MCF 10A (cell line): ENCODE measurements at regions of chr4 and their contacts with region 1.

Region 1: GRCh38 chr4:26126143-26126718 is 194.6 kb upstream of the RBPJ start:
- DNase-seq: no peak
- H3K4me3 Mint-ChIP-seq: no peak overlapping the region
- H3K27ac Mint-ChIP-seq: no peak overlapping the region
- H3K4me1 Mint-ChIP-seq: peaks cover 21% of the 10 kb centered on the region
- H3K27me3 Mint-ChIP-seq: no peaks in the 10 kb centered on the region
- CTCF ChIP-seq: no peak

Region 2: GRCh38 chr4:26105815-26106699 is 20.2 kb before region 1 on chr4:
- CTCF ChIA-PET with region 1: interaction called, 18 read pairs
- POLR2A ChIA-PET with region 1: interaction called, 4 read pairs
- intact Hi-C with region 1: no loop called
- DNase-seq: peak; percentile 60
- H3K4me3 Mint-ChIP-seq: no peak overlapping the region
- H3K27ac Mint-ChIP-seq: no peak overlapping the region
- H3K4me1 Mint-ChIP-seq: peaks cover 18% of the 10 kb centered on the region
- H3K27me3 Mint-ChIP-seq: no peaks in the 10 kb centered on the region
- CTCF ChIP-seq: no peak

Region 3: DNA sequence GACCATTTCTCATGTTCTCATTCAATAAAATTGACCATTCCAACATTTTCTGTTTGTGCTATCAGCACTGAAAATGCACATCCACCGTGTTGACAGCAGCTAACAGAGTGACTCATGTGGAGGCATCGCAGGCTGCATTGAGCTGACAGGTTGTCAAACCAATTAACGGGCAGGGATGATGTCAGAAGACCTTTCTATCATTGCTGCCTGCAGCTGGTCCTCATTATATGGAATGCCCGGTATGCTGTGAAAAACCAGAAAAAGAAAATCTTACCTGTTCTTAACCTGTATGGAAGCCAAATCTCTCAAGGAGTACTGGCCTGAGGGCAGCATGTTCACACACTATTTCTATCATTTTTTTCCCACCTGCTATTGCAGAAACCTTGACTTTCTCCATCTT is 10.1 kb before region 1 on chr4:
- CTCF ChIA-PET with region 1: interaction called, 8 read pairs
- POLR2A ChIA-PET with region 1: interaction called, 14 read pairs
- intact Hi-C with region 1: no loop called
- DNase-seq: no peak
- H3K4me3 Mint-ChIP-seq: no peak overlapping the region
- H3K27ac Mint-ChIP-seq: no peak overlapping the region
- H3K4me1 Mint-ChIP-seq: peaks cover 14% of the 10 kb centered on the region
- H3K27me3 Mint-ChIP-seq: no peaks in the 10 kb centered on the region
- CTCF ChIP-seq: no peak

Region 4: DNA sequence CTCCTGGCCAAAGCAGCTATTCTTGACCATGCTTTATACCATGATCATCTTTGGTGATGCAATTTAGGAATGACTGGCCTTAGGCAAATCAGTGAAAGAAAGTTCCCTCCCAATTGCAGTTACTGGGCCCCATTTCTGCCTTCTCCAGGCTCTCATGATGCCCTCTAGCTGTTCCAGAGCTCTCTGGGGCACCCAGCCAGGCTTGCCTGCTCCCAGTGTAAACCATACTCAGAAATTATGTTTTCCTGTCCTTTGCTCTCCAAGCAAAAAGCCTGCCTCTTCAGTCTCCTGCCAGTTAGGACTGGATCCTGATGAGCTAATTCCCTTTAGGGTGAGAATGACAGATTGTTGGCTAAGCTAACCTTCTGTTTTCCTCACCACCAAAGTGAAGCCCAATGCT is 109.3 kb after region 1 on chr4:
- CTCF ChIA-PET with region 1: interaction called, 22 read pairs
- POLR2A ChIA-PET with region 1: interaction called, 28 read pairs
- intact Hi-C with region 1: loop called (anchors 2 kb)
- DNase-seq: peak; percentile 92
- H3K4me3 Mint-ChIP-seq: no peak overlapping the region
- H3K27ac Mint-ChIP-seq: peak overlapping the region; percentile 61
- H3K4me1 Mint-ChIP-seq: peaks cover 15% of the 10 kb centered on the region
- H3K27me3 Mint-ChIP-seq: no peaks in the 10 kb centered on the region
- CTCF ChIP-seq: no peak

Region 5: DNA sequence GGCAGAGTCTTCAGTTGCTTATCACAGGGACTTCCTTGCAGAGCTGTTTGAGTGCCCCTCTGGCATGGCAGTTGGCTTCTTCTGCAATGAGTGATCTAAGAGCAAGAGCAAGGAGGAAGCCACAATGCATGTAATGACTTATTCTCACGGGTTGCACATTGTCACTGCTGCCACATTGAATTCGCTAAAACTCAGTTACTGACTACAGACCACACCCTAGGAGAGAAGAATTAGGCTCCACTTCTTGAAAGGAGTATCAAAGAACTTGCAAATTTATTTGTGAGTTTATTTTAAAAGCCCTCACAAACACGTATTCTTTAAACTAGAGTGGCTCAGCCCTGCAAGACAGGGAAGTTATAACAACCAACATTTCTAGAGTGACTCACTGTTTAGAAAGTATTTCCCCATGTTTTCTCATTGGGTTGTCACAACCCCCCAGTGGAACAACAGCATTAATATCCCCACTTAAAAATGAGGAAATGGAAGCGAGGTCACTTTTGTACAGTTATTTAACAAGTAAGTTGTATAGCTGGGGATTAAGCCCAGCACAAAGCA is 162.2 kb after region 1 on chr4:
- CTCF ChIA-PET with region 1: interaction called, 9 read pairs
- POLR2A ChIA-PET with region 1: interaction called, 19 read pairs
- intact Hi-C with region 1: no loop called
- DNase-seq: peak; percentile 47
- H3K4me3 Mint-ChIP-seq: no peak overlapping the region
- H3K27ac Mint-ChIP-seq: no peak overlapping the region
- H3K4me1 Mint-ChIP-seq: peaks cover 19% of the 10 kb centered on the region
- H3K27me3 Mint-ChIP-seq: no peaks in the 10 kb centered on the region
- CTCF ChIP-seq: no peak

Region 6: GRCh38 chr4:26319467-26319948 is 193.3 kb after region 1 on chr4:
- CTCF ChIA-PET with region 1: interaction called, 11 read pairs
- POLR2A ChIA-PET with region 1: interaction called, 49 read pairs
- intact Hi-C with region 1: loop called (anchors 1 kb)
- DNase-seq: peak; percentile 100
- H3K4me3 Mint-ChIP-seq: peak overlapping the region; percentile 87
- H3K27ac Mint-ChIP-seq: peak overlapping the region; percentile 94
- H3K4me1 Mint-ChIP-seq: peaks cover 16% of the 10 kb centered on the region
- H3K27me3 Mint-ChIP-seq: no peaks in the 10 kb centered on the region
- CTCF ChIP-seq: no peak

Region 7: DNA sequence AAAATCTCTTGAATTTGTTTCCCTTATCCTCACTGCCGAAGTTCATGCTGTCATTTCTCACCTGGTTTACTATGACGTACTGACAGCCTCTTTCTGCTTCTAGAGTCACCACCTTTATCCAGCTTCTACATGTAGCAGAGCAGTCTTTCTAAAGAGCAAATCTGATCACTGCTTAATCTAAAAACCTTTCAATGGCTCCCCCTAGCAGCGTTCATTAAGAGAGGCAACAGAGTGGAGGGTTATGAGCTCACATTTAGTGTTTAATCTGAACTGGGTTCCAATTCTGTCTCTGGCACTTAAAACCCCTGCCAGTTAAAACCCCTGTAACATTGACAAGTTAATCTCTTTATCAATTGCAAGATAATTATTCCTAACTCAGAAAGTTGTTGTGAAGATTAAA is 199.0 kb after region 1 on chr4:
- CTCF ChIA-PET with region 1: interaction called, 11 read pairs
- POLR2A ChIA-PET with region 1: interaction called, 49 read pairs
- intact Hi-C with region 1: no loop called
- DNase-seq: peak; percentile 64
- H3K4me3 Mint-ChIP-seq: no peak overlapping the region
- H3K27ac Mint-ChIP-seq: no peak overlapping the region
- H3K4me1 Mint-ChIP-seq: peaks cover 29% of the 10 kb centered on the region
- H3K27me3 Mint-ChIP-seq: no peaks in the 10 kb centered on the region
- CTCF ChIP-seq: peak; percentile 31